Right ventricle myocardium inferior (tissue), 1 donor: ENCODE measurements at regions of chr7 and their contacts with region 1.

Region 1: DNA sequence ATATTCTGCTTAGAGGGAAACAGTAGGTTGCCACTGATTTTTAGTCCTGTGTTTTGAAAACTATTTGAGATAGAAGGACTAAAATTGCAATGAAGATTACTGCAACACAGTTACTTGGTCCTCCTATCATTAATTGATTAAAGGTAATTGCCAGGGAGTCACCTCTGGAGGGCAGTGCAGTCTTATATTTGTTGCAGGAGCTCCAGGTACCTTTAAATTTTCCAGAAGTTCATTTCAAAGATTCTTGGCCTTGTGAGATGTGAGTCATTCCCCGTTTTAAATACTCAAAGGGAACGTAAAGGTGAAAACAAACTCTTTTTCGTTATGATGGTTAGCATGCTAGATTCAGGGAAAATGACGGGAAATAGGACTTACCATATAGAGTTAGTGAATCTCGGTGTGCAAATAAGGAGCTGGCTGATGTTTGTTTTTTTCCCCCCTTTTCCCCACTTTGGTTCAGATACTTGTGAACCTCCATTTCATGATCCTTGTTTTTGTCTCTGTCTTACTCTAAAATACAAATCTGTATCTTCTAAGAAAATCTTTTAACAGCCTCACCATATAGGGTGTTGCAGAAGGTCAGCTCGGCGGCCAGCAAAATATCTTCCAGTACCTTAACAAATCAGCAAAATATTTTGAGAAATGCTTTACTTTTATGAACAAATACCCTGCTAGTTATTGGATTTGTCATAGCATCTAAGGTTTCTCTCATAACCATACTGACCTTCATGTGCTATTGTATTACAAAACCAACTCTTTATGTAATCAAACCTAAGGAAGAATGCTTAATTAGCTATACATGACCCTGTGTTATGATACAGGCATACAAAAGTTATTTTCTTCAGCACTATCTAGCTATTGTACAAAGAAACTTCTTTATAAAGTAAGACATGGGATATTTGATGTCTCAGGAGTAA is 143.0 kb upstream of the HDAC9 start:
- DNase-seq: no peak
- ATAC-seq: peak; percentile 44

Region 2: DNA sequence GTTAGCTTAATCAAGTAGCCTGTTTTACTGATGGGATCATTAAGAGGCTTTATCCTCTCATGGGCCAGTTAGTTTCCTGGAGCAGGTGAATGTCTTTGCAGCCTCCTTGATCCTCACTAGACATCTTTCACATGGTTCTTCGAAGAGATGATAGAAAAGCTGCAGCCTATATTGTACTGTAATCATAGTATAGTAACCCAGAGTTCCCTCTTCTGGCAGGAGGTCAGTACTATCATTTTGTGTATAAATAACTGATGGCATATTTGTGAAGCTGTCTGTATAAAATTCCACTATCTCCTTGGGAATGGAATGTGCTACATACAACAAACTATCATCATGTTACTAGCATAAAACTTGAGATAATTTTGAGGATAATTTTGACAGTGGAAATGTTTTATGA is 201.2 kb before region 1 on chr7:
- intact Hi-C with region 1: no loop called
- DNase-seq: no peak
- ATAC-seq: no peak

Region 3: DNA sequence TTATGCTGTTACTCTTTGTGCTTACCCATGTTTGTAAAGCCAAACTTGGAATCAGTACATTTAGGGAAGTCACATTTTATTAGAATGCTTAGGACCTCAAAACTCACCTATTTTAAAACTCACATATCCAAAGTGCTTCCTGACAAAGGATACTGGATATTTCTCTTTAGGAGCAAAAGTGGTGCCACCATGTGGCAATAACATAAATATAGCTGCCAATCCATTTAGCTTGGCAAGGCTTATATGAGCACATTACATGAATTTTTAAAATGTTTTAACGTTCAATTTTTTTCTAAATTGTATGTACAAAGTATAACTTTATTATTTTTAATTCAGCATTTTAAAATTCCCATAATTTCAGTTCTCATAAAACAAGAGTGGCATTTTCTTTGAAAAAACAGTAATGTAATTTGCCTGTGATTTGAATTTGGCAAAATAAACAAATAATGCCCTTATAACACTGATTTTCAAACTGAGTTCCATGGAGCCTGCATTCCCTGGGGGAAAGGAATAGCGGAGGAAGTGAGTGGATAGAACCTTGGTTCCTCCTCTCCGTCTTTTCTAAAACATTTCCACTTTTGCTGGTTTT is 218.4 kb after region 1 on chr7:
- intact Hi-C with region 1: loop called (anchors 2 kb)
- DNase-seq: no peak
- ATAC-seq: no peak

Region 4: GRCh38 chr7:18740579-18740988 is 388.0 kb after region 1 on chr7:
- intact Hi-C with region 1: no loop called
- DNase-seq: no peak
- ATAC-seq: no peak

Region 5: DNA sequence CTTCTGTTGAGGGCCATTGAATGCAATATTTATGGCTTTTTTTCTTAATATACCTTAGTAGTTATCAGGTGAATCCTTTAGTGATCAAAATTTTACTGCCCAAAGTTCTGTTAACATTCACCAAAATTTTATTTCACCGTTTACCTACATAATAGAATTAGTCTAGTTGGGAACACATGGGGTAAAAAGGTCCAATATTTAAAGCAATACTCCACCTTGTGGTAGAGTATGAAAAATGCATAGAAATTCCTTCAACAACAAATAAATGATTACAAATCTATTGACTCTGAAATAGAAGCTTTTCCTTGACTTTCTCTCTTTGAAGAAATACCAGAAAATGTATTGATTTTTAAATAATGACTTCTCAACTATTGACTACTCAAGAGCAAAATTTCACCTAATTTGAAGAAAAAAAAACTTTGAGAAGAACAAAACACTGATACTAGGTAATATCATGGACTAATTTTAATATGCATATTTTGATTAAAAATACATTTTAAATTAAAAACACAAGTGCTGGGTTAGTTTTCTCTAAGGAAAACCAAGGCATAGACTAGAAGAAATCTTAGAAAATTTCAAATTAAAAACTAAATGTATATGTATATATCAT is 1312.9 kb after region 1 on chr7:
- intact Hi-C with region 1: loop called (anchors 10 kb)
- DNase-seq: no peak
- ATAC-seq: no peak